ENCODE measurements at regions of chr15 and their contacts with region 1.

Region 1: GRCh38 chr15:75104804-75105535 is 81.6 kb downstream of the PPCDC start:
- DNase-seq: no peak
- ATAC-seq: peak; percentile 47
- H3K4me3 Mint-ChIP-seq: peak overlapping the region; percentile 56
- H3K27ac Mint-ChIP-seq: peak overlapping the region; percentile 80
- H3K4me1 Mint-ChIP-seq: peaks cover 61% of the 10 kb centered on the region
- H3K27me3 Mint-ChIP-seq: peaks cover 5% of the 10 kb centered on the region
- CTCF ChIP-seq: no peak

Region 2: DNA sequence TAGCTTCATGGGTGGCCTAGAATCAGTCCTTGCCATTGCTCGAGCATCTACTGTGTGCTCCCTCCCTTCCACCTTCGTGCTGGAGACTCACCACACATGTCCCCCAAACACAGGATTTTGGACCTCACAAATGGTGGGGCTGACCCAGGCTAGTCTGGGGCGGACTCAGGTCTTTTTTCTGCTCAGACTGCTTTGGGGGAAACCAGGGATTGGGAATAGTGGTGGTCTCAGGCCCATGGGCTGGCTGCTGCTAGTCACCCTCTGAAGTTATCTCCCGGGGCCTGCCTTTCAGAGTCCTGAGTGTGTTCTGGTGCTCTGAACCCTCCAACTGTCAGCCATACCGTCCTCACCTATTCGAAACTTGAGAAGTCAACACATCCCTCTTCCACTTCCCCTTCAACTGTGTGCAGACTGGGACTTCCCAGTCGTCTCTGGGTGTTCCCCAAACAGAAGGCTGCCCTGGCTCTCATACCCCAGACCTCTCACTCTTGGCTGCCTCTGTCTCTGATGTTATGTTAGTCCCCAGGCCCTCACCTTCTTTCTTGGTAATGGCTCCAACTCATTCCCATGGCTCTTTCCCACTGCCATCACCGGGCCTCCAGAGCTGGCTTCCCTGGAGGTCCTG is 35.6 kb before region 1 on chr15:
- CTCF ChIA-PET with region 1: no interaction called
- POLR2A ChIA-PET with region 1: no interaction called
- intact Hi-C with region 1: loop called (anchors 1 kb)
- DNase-seq: peak; percentile 44
- ATAC-seq: peak; percentile 100
- H3K4me3 Mint-ChIP-seq: peak overlapping the region; percentile 29
- H3K27ac Mint-ChIP-seq: peak overlapping the region; percentile 82
- H3K4me1 Mint-ChIP-seq: peaks cover 60% of the 10 kb centered on the region
- H3K27me3 Mint-ChIP-seq: no peaks in the 10 kb centered on the region
- CTCF ChIP-seq: no peak

Region 3: GRCh38 chr15:75090388-75090734 is 14.6 kb before region 1 on chr15:
- CTCF ChIA-PET with region 1: no interaction called
- POLR2A ChIA-PET with region 1: interaction called, 20 read pairs
- intact Hi-C with region 1: loop called (anchors 1 kb)
- DNase-seq: no peak
- ATAC-seq: no peak
- H3K4me3 Mint-ChIP-seq: no peak overlapping the region
- H3K27ac Mint-ChIP-seq: no peak overlapping the region
- H3K4me1 Mint-ChIP-seq: peaks cover 26% of the 10 kb centered on the region
- H3K27me3 Mint-ChIP-seq: peaks cover 13% of the 10 kb centered on the region
- CTCF ChIP-seq: no peak

Region 4: DNA sequence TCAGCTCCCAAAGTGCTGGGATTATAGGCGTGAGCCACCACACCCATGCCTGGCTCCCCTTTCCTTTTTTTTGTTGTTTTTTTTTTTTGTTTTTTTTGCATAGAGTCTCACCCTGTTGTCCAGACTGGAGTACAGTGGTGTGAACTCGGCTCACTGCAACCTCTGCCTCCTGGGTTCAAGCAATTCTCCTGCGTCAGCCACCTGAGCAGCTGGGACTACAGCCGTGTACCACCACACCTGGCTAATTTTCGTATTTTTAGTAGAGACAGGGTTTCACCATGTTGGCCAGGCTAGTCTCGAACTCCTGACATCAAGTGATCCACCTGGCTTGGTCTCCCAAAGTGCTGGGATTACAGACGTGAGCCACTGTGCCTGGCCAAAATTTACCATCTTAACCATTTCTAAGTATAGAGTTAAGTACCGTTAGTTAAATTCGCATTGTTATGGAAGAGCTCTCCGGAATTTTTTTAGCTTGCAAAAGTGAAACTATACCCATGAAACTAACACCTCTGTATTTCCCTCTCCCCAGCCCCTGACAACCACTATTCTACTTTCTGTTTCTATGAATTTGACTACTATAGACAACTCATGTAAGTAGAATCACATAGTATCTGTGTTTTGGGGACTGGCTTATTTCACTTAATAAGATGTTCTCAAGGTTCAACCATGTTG is 25.8 kb after region 1 on chr15:
- CTCF ChIA-PET with region 1: no interaction called
- POLR2A ChIA-PET with region 1: interaction called, 11 read pairs
- intact Hi-C with region 1: loop called (anchors 1 kb)
- DNase-seq: no peak
- ATAC-seq: peak; percentile 96
- H3K4me3 Mint-ChIP-seq: peak overlapping the region; percentile 80
- H3K27ac Mint-ChIP-seq: peak overlapping the region; percentile 73
- H3K4me1 Mint-ChIP-seq: peaks cover 19% of the 10 kb centered on the region
- H3K27me3 Mint-ChIP-seq: no peaks in the 10 kb centered on the region
- CTCF ChIP-seq: no peak

Measured in activated B cell treated with CpG ODN at 0.5 μM for 24 hours (primary cell).